Natural killer cell (primary cell): ENCODE measurements at regions of chr1 and their contacts with region 1.

Region 1: GRCh38 chr1:167517535-167518330 is 596 bp downstream of the CD247 start:
- DNase-seq: peak; percentile 86 to 89
- ATAC-seq: peak; percentile 76 to 91 (median 83)
- H3K4me3 ChIP-seq: peak overlapping the region; percentile 96
- H3K4me3 Mint-ChIP-seq: peak overlapping the region; percentile 95
- H3K27ac ChIP-seq: peak overlapping the region; percentile 97
- H3K27ac Mint-ChIP-seq: peak overlapping the region; percentile 91 to 100
- H3K4me1 ChIP-seq: peaks cover 36% of the 10 kb centered on the region
- H3K4me1 Mint-ChIP-seq: peaks cover 51 to 60% of the 10 kb centered on the region in 2 donors
- H3K27me3 ChIP-seq: no peaks in the 10 kb centered on the region
- H3K27me3 Mint-ChIP-seq: no peaks in the 10 kb centered on the region
- CTCF ChIP-seq: no peak

Region 2: DNA sequence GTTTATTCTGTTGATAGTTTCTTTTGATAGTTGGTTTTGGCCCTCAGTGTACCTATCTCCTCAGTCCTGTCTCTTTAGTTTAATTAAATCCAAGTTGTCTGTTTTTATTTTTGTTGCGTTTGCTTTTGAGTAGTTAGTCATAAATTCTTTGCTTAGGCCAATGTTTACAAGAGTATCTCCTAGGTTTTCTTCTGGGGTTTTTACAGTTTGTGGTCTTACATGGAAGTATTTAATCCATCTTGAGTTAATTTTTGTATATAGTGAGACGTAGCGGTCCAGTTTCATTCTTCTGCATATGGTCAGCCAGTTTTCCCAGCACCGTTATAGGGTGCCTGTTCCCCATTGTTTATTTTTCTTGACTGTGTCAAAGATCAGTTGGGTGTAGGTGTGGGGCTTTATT is 157.6 kb before region 1 on chr1:
- intact Hi-C with region 1: no loop called
- DNase-seq: no peak
- ATAC-seq: no peak
- H3K4me3 ChIP-seq: no peak overlapping the region
- H3K4me3 Mint-ChIP-seq: no peak overlapping the region
- H3K27ac ChIP-seq: no peak overlapping the region
- H3K27ac Mint-ChIP-seq: no peak overlapping the region
- H3K4me1 ChIP-seq: no peaks in the 10 kb centered on the region
- H3K4me1 Mint-ChIP-seq: peaks cover 21 to 23% of the 10 kb centered on the region in 2 donors
- H3K27me3 ChIP-seq: no peaks in the 10 kb centered on the region
- H3K27me3 Mint-ChIP-seq: no peaks in the 10 kb centered on the region
- CTCF ChIP-seq: no peak

Region 3: DNA sequence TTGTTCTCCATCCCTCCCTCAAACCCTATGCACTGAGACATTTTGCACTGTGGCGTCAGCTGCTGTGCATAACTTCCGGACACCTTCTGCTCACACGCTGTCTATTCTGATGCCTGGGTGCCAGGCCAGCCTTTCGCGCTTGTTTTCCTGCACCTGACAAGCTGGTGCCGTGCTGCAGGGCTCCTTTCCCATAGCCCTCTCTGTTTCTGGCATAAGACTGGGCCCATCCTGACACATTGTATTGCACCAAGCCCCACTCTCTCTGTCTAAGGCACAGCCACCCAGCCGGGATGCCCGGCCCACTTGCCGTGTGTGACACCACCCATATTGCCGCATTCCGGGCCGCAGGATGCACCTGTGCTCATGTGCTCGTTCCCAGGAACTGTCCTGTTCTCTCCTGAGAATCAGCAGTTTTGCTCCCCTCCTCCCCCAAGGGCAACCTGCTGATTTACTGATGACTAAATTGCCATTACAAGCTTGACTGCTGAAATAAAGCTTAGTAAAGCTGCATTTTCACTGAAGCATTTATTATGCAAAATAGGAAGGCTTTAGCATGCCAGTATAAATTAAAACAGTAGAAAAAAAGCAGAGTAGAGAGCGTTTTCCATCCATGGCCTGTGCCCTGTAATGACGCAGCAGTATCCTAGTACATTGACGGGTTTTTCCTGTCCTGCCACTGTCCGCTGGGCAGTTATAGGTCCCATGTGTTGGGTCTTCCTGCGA is 87.4 kb before region 1 on chr1:
- intact Hi-C with region 1: loop called (anchors 1 kb)
- DNase-seq: peak; percentile 52 to 58
- ATAC-seq: peak; percentile 20 to 50 (median 21)
- H3K4me3 ChIP-seq: no peak overlapping the region
- H3K4me3 Mint-ChIP-seq: peak overlapping the region; percentile 85
- H3K27ac ChIP-seq: peak overlapping the region; percentile 98
- H3K27ac Mint-ChIP-seq: peak overlapping the region; percentile 91 to 100
- H3K4me1 ChIP-seq: peaks cover 82% of the 10 kb centered on the region
- H3K4me1 Mint-ChIP-seq: peaks cover 87 to 89% of the 10 kb centered on the region in 2 donors
- H3K27me3 ChIP-seq: no peaks in the 10 kb centered on the region
- H3K27me3 Mint-ChIP-seq: no peaks in the 10 kb centered on the region
- CTCF ChIP-seq: no peak

Region 4: GRCh38 chr1:167454894-167455785 is 62.6 kb before region 1 on chr1:
- intact Hi-C with region 1: loop called (anchors 1 kb)
- DNase-seq: peak; percentile 75 to 92
- ATAC-seq: peak; percentile 30 to 69 (median 61)
- H3K4me3 ChIP-seq: peak overlapping the region; percentile 69
- H3K4me3 Mint-ChIP-seq: peak overlapping the region; percentile 91
- H3K27ac ChIP-seq: peak overlapping the region; percentile 98
- H3K27ac Mint-ChIP-seq: peak overlapping the region; percentile 91 to 100
- H3K4me1 ChIP-seq: peaks cover 77% of the 10 kb centered on the region
- H3K4me1 Mint-ChIP-seq: peaks cover 72 to 74% of the 10 kb centered on the region in 2 donors
- H3K27me3 ChIP-seq: no peaks in the 10 kb centered on the region
- H3K27me3 Mint-ChIP-seq: no peaks in the 10 kb centered on the region
- CTCF ChIP-seq: no peak

Region 5: DNA sequence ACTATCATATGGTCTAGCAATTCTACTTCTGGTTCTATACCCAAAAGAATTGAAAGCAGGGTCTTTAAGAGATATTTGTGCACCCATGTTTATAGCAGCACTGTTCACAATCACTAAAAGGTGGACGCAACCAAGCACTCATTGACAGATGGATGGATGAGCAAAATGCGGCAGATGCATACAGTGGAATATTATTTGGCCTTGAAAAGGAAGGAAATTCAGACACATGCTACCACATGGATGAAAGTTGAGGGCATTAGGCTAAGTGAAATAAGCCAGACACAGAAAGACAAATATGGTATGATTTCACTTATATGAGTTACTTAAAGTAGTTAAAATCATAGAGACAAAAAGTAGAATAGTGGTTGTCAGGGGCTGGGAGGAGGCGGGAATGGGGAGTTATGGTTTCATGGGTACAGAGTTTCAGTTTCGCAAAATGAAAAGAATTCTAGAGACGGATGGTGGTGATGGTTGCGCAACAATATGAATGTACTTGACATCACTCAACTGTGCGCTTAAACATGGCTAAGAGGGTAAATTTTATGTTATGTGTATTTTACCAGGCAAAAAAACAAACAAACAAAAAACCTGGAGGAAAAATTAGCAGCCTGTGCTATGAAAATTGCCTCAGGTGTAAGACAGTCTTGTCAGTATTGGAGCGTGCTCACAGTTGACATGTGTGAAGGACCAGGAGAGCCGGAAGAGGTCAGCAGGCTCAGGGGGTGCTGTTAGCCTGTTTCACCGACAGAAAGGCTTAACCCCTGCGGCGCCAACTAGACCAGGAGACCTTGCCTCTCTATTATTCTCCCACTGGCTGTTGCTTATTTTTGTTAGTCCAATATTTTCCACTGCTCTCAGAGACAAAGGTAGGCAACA is 25.9 kb before region 1 on chr1:
- intact Hi-C with region 1: loop called (anchors 2 kb)
- DNase-seq: peak; percentile 52 to 78
- ATAC-seq: peak; percentile 34 to 68 (median 54)
- H3K4me3 ChIP-seq: no peak overlapping the region
- H3K4me3 Mint-ChIP-seq: peak overlapping the region; percentile 87
- H3K27ac ChIP-seq: peak overlapping the region; percentile 97
- H3K27ac Mint-ChIP-seq: peak overlapping the region; percentile 91 to 100
- H3K4me1 ChIP-seq: peaks cover 96% of the 10 kb centered on the region
- H3K4me1 Mint-ChIP-seq: peaks cover 95 to 99% of the 10 kb centered on the region in 2 donors
- H3K27me3 ChIP-seq: no peaks in the 10 kb centered on the region
- H3K27me3 Mint-ChIP-seq: no peaks in the 10 kb centered on the region
- CTCF ChIP-seq: no peak

Region 6: GRCh38 chr1:167627865-167628641 is 110.3 kb after region 1 on chr1:
- intact Hi-C with region 1: no loop called
- DNase-seq: peak; percentile 53 to 90
- ATAC-seq: peak; percentile 57 to 77 (median 65)
- H3K4me3 ChIP-seq: peak overlapping the region; percentile 11
- H3K4me3 Mint-ChIP-seq: peak overlapping the region; percentile 88
- H3K27ac ChIP-seq: peak overlapping the region; percentile 89
- H3K27ac Mint-ChIP-seq: peak overlapping the region; percentile 89 to 93
- H3K4me1 ChIP-seq: peaks cover 52% of the 10 kb centered on the region
- H3K4me1 Mint-ChIP-seq: peaks cover 57 to 62% of the 10 kb centered on the region in 2 donors
- H3K27me3 ChIP-seq: no peaks in the 10 kb centered on the region
- H3K27me3 Mint-ChIP-seq: no peaks in the 10 kb centered on the region
- CTCF ChIP-seq: no peak

Region 7: DNA sequence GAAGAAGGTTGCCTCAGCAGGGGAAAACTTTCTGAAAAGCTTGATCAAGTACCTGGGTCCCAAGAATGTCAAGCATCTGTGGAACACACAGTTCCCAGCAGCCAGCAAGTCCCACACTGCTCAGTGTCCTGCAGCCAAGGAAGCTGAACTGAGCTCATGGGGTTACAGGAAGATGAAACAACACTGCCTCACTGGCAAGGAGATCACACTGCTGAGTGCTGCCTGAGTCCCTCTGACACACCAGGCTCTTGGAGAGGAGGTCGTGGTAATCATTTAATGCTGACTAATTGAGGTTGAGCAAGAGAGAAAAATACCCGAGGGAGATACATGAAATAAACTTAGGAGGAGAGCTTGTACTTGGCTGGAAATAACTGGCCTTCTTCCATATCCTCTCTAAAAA is 279.3 kb after region 1 on chr1:
- intact Hi-C with region 1: no loop called
- DNase-seq: no peak
- ATAC-seq: no peak
- H3K4me3 ChIP-seq: no peak overlapping the region
- H3K4me3 Mint-ChIP-seq: no peak overlapping the region
- H3K27ac ChIP-seq: no peak overlapping the region
- H3K27ac Mint-ChIP-seq: no peak overlapping the region
- H3K4me1 ChIP-seq: no peaks in the 10 kb centered on the region
- H3K4me1 Mint-ChIP-seq: no peaks in the 10 kb centered on the region
- H3K27me3 ChIP-seq: no peaks in the 10 kb centered on the region
- H3K27me3 Mint-ChIP-seq: no peaks in the 10 kb centered on the region
- CTCF ChIP-seq: no peak